ENCODE measurements at regions of chr4 and their contacts with region 1.

Region 1: GRCh38 chr4:4254666-4255065 is 6.6 kb upstream of the TMEM128 start:
- DNase-seq: no peak
- H3K4me3 ChIP-seq: no peak overlapping the region
- H3K27ac ChIP-seq: no peak overlapping the region
- H3K4me1 ChIP-seq: no peaks in the 10 kb centered on the region
- H3K27me3 ChIP-seq: peaks cover 0 to 8% (median 0%) of the 10 kb centered on the region in 4 donors
- CTCF ChIP-seq: no peak
- EP300 ChIP-seq: no peak
- POLR2A ChIP-seq: no peak

Region 2: GRCh38 chr4:4200624-4201023 is 54.0 kb before region 1 on chr4:
- intact Hi-C with region 1: no loop called
- DNase-seq: no peak
- H3K4me3 ChIP-seq: no peak overlapping the region
- H3K27ac ChIP-seq: no peak overlapping the region
- H3K4me1 ChIP-seq: no peaks in the 10 kb centered on the region
- H3K27me3 ChIP-seq: peaks cover 0 to 34% (median 0%) of the 10 kb centered on the region in 4 donors
- CTCF ChIP-seq: no peak
- EP300 ChIP-seq: no peak
- POLR2A ChIP-seq: no peak

Region 3: DNA sequence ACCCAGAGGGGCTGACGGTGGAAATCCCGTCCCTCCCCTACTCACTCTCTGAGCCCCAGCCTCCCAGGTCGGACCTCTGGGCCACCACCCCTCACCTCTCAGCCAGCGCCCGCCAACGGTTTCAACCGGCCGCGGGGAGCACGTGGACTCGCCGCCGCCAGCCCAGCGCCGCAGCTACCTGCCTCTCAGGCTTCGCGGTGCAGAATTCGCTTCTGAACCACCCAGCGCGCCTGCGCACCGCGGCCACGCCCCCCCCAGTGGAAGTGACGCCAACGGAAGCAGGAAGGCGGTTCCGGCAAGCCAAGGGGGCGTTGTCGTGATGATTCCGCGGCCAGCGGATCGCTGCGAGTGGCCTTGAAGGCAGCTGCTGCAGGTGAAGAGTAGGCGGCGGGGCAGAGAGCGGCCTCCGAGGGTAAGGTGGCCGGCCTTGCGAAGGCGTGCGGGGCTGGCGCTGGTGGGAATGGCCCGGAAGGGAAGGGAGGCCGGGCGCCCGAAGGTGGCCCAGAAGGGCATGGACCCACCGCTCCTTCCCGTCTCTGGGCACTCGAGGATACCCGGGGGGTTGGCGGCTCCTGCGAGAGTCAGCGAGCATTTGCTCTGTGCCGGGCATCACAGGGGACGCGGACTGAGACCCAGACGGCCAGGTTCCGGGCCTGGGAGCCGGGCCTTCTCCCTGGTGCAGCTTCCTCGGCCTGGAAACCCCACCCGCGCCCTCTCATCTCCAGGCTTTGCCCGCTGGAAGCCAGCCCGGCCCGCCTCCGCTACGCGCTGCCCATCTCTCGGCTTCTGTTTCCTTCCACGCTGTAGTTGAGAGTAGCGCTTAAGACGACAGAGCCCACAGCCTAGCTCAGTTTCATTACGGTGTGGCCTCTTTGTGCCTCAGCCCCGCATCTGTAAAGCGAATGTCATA is 35.5 kb after region 1 on chr4 and contains the starts of genes LYAR and ZBTB49:
- intact Hi-C with region 1: loop called (anchors 5 kb)
- DNase-seq: peak; percentile 98
- H3K4me3 ChIP-seq: peak within 1 kb of the TSS; percentile 72 to 98 (median 83)
- H3K27ac ChIP-seq: peak within 1 kb of the TSS; percentile 77 to 94 (median 80)
- H3K4me1 ChIP-seq: peaks cover 24 to 42% (median 27%) of the 10 kb centered on the region in 4 donors
- H3K27me3 ChIP-seq: no peaks in the 10 kb centered on the region
- CTCF ChIP-seq: no peak
- EP300 ChIP-seq: no peak
- POLR2A ChIP-seq: peak; percentile 25
- total RNA-seq, gene LYAR: 12.2 to 18.4 (median 13.3) TPM
- total RNA-seq, gene ZBTB49: 2.9 to 5.9 (median 3.4) TPM

Measured in esophagus muscularis mucosa (tissue), 4 donors.